Psoas muscle (tissue), 8 donors: ENCODE measurements at regions of chr21 and their contacts with region 1.

Region 1: GRCh38 chr21:44752634-44753291 is 41.4 kb upstream of the TSPEAR start:
- DNase-seq: no peak
- ATAC-seq: no peak
- H3K4me3 ChIP-seq: no peak overlapping the region
- H3K27ac ChIP-seq: no peak overlapping the region
- H3K4me1 ChIP-seq: no peaks in the 10 kb centered on the region
- H3K27me3 ChIP-seq: peaks cover 0 to 14% (median 13%) of the 10 kb centered on the region in 3 donors
- CTCF ChIP-seq: no peak

Region 2: GRCh38 chr21:42833439-42833815 is 1919.3 kb before region 1 on chr21:
- intact Hi-C with region 1: loop called in 1 of 2 experiments (anchors 10 kb)
- DNase-seq: no peak
- ATAC-seq: peak in 2 of 4 donors; percentile 23 to 36
- H3K4me3 ChIP-seq: no peak overlapping the region
- H3K27ac ChIP-seq: no peak overlapping the region
- H3K4me1 ChIP-seq: no peaks in the 10 kb centered on the region
- H3K27me3 ChIP-seq: peaks cover 0 to 39% (median 1%) of the 10 kb centered on the region in 3 donors
- CTCF ChIP-seq: no peak

Region 3: DNA sequence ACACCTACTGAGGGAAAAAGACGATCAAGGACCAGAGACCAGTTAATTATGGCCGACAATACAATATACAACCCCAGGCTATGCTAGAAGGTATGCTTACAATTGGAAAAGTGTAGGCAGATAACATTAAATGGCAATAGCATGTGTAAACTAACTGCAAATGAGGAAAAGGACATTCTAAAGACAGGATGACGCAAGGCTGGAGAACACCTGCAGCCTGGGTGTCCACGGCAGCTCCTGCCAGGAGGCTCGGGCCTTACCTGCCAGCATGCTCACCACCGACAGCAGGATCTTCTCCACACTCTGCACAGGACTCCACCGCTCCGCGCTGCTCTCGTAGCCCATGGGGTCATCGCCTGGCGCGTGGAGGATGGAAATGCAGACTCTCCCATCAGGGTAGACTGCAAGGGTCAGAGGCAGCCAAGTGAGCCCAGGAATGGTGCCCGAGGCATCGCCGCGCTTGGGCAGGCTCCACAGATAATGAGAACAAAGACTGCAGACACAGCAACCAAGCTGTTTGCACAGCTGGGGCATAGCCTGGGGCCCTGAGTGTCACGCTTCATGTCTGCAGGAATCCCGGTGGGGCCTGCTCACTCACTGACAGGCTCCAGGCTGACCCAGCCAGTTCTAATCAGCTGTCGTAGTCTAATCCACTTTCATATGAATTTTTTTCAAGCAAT is 20.7 kb after region 1 on chr21:
- intact Hi-C with region 1: no loop called
- DNase-seq: no peak
- ATAC-seq: no peak
- H3K4me3 ChIP-seq: no peak overlapping the region
- H3K27ac ChIP-seq: no peak overlapping the region
- H3K4me1 ChIP-seq: no peaks in the 10 kb centered on the region
- H3K27me3 ChIP-seq: no peaks in the 10 kb centered on the region
- CTCF ChIP-seq: no peak